PC-3 (cell line): ENCODE measurements at regions of chrX and their contacts with region 1.

Region 1: DNA sequence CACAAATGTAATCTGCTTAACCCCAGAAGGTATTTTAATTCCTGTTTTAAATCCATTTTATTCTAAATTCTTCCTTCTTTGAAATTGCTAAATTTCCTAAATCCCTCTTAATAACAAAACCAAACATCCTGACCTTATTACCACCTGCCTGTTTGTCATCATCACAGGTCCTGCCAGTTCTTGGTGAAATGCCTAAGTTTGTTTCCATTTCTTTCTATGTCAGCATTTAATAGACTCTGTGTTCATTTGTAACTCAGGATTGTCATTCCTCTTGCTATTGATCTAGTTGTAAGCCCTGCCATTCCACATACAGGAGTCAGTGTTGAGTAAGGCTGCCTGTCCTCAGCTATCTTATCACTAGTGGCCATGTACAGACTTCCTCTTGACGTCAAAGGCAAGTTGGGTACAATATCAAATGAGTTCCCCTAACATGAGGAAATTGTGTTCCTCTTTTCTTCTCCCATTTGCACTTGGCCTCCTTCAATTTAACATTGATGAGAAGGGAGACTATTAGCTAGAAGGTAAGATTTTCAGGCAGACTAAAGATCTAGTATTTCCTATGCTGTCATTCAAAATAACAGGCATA is 440.1 kb downstream of the AFF2 start:
- DNase-seq: no peak
- ATAC-seq: no peak
- H3K4me3 ChIP-seq: no peak overlapping the region
- H3K27ac ChIP-seq: no peak overlapping the region
- H3K4me1 ChIP-seq: no peaks in the 10 kb centered on the region
- H3K27me3 ChIP-seq: no peaks in the 10 kb centered on the region
- CTCF ChIP-seq: no peak

Region 2: GRCh38 chrX:148713981-148714380 is 226.5 kb before region 1 on chrX:
- CTCF ChIA-PET with region 1: no interaction called
- POLR2A ChIA-PET with region 1: no interaction called
- intact Hi-C with region 1: no loop called
- DNase-seq: no peak
- ATAC-seq: no peak
- H3K4me3 ChIP-seq: no peak overlapping the region
- H3K27ac ChIP-seq: no peak overlapping the region
- H3K4me1 ChIP-seq: no peaks in the 10 kb centered on the region
- H3K27me3 ChIP-seq: no peaks in the 10 kb centered on the region
- CTCF ChIP-seq: no peak

Region 3: GRCh38 chrX:148784856-148785255 is 155.6 kb before region 1 on chrX:
- CTCF ChIA-PET with region 1: no interaction called
- POLR2A ChIA-PET with region 1: interaction called, 14 read pairs
- intact Hi-C with region 1: no loop called
- DNase-seq: no peak
- ATAC-seq: no peak
- H3K4me3 ChIP-seq: no peak overlapping the region
- H3K27ac ChIP-seq: no peak overlapping the region
- H3K4me1 ChIP-seq: no peaks in the 10 kb centered on the region
- H3K27me3 ChIP-seq: no peaks in the 10 kb centered on the region
- CTCF ChIP-seq: no peak